GM18951 (cell line): ENCODE measurements at regions of chr12 and their contacts with region 1.

Region 1: GRCh38 chr12:111812881-111813741 is 28.9 kb upstream of the MAPKAPK5 start:
- POLR2A ChIP-seq: no peak

Region 2: DNA sequence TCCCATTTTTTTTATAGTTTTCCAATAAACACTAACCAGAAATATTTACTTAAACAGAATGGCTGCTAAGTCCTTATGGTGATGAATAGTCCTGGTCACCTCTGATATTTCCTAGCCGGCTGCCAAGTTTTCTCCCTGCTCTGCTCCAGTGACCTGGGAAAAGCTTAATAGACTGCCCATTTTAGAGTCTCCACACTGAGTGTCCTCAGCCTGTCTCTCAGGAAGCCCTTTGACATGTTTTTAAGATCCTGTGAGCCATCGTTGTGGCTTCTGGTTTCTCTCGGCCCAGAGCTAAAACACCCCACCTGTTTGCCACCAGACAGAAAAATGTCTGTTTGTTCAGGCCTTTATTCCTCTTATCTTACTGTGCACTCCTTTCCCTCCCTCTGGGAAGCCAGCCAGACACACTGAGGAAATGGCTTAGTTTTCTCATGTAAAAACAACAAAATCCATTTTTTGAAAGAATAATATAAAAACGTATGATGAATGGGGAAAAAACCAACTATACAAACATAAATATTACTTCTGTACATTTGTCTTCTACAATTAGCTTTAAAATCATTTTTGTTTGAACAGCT is 71.8 kb before region 1 on chr12:
- in situ Hi-C with region 1: loop called (anchors 10 kb)
- POLR2A ChIP-seq: no peak

Region 3: DNA sequence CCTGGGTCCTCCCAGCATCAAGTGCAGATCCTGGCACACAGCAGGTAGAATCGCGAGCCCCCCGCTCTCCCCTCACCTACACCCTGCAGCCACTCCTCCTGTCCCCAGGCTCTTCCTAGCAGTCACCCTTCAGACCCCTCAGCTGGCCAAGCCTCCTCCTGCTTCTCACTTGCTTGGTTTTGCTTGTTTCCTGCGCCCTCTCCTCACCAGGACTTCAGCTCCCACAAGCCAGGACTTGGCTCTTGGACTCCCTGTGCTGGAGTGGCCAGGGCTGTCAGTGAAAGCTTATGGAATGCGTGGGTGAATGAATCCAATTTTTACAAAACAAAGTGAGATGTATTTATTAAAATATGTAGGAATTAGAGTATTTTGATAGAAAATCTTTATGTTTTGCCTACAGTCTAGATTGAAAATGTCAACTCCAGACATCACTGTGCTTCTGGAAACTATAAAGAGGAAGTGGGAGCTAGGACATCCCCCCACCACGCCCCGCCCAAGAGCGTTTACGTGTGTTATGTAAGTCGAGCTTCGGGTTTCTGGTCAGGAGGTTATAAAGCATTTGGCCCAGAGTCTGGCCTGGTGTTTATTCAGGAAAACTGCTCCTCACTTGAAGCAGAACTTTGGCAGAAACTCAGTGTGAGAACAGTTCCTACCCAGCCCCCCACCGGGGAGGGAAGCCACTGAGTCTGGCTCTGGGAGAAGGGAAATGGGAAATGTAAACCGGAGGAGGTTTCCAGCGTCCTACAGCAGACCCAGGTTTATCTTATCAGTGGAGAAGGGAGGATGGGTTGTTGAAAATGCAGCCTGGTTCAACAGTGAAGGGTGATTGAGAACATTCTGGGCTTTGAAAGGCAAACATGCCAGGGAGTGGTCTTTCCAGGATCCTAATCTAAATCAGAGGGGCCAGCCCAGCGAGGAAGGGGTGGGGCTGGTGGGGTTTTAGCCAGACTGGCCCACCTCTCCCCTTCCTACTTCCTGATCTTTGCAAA is 37.6 kb before region 1 on chr12:
- in situ Hi-C with region 1: no loop called
- POLR2A ChIP-seq: peak; percentile 54

Region 4: GRCh38 chr12:113103756-113104450 is 1290.8 kb after region 1 on chr12:
- in situ Hi-C with region 1: no loop called
- POLR2A ChIP-seq: no peak